ENCODE measurements at regions of chrX and their contacts with region 1.

Region 1: DNA sequence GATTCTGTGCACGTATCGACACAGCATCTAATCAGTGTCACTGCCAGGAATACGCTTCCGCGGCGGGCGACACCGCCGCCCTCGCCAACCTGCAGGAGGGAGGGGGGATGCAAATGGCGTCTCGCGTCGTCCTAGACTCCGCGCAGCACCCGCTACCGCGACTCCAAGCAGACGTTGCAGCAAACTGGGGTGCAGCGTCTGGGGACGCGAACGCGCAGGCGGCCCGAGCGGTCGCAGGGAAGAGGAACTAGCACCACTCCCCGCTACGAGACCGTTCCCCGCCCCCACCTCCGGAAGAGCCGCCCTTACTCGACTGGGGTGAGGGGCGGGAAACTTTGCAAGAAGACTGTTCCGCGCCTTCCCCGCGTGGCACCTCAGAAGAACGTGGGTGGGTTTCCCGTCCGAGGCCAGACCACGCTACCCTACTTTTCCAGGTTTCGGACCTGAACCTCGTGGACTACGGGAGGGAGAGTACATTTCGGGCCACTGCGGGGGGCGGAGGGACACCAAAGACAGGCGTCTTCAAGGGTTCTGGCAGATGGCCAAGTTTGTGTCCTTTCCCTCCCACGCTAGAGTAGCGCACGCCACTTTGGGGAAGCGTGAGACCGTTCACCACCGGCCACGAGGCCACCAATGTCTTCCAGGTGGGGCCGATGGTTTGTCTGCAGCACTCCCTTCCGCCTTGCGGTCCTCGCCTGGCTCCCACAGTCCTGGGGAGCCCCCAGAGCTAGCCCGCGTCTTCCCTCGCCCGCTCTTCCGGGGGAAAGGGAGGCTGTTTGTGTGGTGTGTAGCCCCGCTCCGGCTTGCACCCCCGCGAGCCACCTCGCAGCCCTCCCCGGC is 78.0 kb upstream of the BCOR start:
- DNase-seq: peak; percentile 88
- H3K4me3 ChIP-seq: peak overlapping the region; percentile 74
- H3K27ac ChIP-seq: peak overlapping the region; percentile 100
- H3K4me1 ChIP-seq: peaks cover 54% of the 10 kb centered on the region
- CTCF ChIP-seq: no peak

Region 2: GRCh38 chrX:38774249-38774648 is 1401.5 kb before region 1 on chrX:
- CTCF ChIA-PET with region 1: no interaction called
- POLR2A ChIA-PET with region 1: no interaction called
- intact Hi-C with region 1: no loop called
- DNase-seq: no peak
- H3K4me3 ChIP-seq: no peak overlapping the region
- H3K27ac ChIP-seq: no peak overlapping the region
- H3K4me1 ChIP-seq: no peaks in the 10 kb centered on the region
- CTCF ChIP-seq: no peak

Region 3: GRCh38 chrX:39759526-39760184 is 416.1 kb before region 1 on chrX:
- CTCF ChIA-PET with region 1: interaction called, 7 read pairs
- POLR2A ChIA-PET with region 1: interaction called, 5 read pairs
- intact Hi-C with region 1: loop called (anchors 2 kb)
- DNase-seq: no peak
- H3K4me3 ChIP-seq: no peak overlapping the region
- H3K27ac ChIP-seq: peak overlapping the region; percentile 47
- H3K4me1 ChIP-seq: peaks cover 91% of the 10 kb centered on the region
- CTCF ChIP-seq: no peak

Region 4: GRCh38 chrX:40207626-40208025 is 31.9 kb after region 1 on chrX:
- CTCF ChIA-PET with region 1: no interaction called
- POLR2A ChIA-PET with region 1: interaction called, 5 read pairs
- intact Hi-C with region 1: loop called (anchors 2 kb)
- DNase-seq: no peak
- H3K4me3 ChIP-seq: no peak overlapping the region
- H3K27ac ChIP-seq: no peak overlapping the region
- H3K4me1 ChIP-seq: peaks cover 25% of the 10 kb centered on the region
- CTCF ChIP-seq: no peak

Region 5: DNA sequence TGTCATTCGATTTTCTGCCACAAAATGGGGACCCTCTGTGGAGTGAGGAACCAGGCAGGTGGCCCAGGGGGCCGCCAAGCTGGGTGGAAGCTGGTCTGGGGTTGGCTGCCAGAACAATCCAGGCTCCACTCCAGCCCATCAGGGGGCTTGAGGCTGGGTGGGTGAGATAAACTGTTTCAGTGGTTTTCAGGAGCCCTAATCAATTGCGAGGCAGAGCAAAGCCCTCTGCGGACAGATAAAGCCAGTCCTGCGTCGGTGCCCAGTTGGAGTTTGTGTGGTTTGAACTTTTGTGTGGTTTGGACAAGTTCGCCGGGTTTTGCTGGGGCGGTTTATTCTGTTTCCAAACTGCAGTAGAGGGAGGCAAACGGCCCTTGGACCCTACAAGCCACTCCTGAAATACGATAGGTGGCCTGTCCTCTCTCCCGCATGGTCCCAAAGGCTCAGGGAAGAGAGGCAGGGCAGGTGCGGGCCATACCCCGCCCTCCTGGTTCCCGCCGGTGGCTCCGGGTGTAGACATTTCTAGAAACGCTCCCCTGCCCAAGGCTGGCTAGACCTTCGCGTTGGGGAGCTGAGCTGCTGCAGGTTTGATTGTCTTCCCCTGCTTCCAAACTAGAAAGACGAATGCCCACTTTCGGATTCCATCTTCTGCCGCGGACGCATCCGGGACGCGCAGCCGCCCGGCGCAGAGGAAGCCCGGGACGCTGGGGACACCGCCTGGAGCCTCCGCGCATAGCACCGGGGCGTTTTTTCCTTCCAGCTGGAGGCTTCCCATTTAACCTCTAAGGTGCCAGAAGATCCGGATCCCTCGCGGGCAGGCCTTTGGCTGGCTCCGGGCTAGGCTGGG is 91.0 kb after region 1 on chrX:
- CTCF ChIA-PET with region 1: no interaction called
- POLR2A ChIA-PET with region 1: no interaction called
- intact Hi-C with region 1: loop called (anchors 2 kb)
- DNase-seq: peak; percentile 62
- H3K4me3 ChIP-seq: peak overlapping the region; percentile 58
- H3K27ac ChIP-seq: no peak overlapping the region
- H3K4me1 ChIP-seq: peaks cover 26% of the 10 kb centered on the region
- CTCF ChIP-seq: peak; percentile 71

Region 6: GRCh38 chrX:40326186-40326965 is 150.6 kb after region 1 on chrX:
- CTCF ChIA-PET with region 1: no interaction called
- POLR2A ChIA-PET with region 1: no interaction called
- intact Hi-C with region 1: no loop called
- DNase-seq: no peak
- H3K4me3 ChIP-seq: no peak overlapping the region
- H3K27ac ChIP-seq: no peak overlapping the region
- H3K4me1 ChIP-seq: no peaks in the 10 kb centered on the region
- CTCF ChIP-seq: no peak